Activated CD4-positive, alpha-beta memory T cell treated with anti-CD3 and anti-CD28 coated beads for 36 hours (primary cell): ENCODE measurements at regions of chr7 and their contacts with region 1.

Region 1: GRCh38 chr7:92633211-92633906 is 43.2 kb upstream of the FAM133B start:
- DNase-seq: peak; percentile 53
- H3K4me3 Mint-ChIP-seq: peak overlapping the region; percentile 36
- H3K27ac Mint-ChIP-seq: peak overlapping the region; percentile 93
- H3K4me1 Mint-ChIP-seq: peaks cover 81% of the 10 kb centered on the region
- H3K27me3 Mint-ChIP-seq: no peaks in the 10 kb centered on the region

Region 2: GRCh38 chr7:92135052-92135889 is 498.1 kb before region 1 on chr7:
- CTCF ChIA-PET with region 1: no interaction called
- POLR2A ChIA-PET with region 1: no interaction called
- intact Hi-C with region 1: no loop called
- DNase-seq: peak; percentile 30
- H3K4me3 Mint-ChIP-seq: peak overlapping the region; percentile 99
- H3K27ac Mint-ChIP-seq: peak overlapping the region; percentile 100
- H3K4me1 Mint-ChIP-seq: peaks cover 30% of the 10 kb centered on the region
- H3K27me3 Mint-ChIP-seq: peaks cover 2% of the 10 kb centered on the region

Region 3: GRCh38 chr7:92621026-92621540 is 12.3 kb before region 1 on chr7:
- CTCF ChIA-PET with region 1: interaction called, 9 read pairs
- POLR2A ChIA-PET with region 1: interaction called, 7 read pairs
- intact Hi-C with region 1: loop called (anchors 1 kb)
- DNase-seq: peak; percentile 86
- H3K4me3 Mint-ChIP-seq: peak overlapping the region; percentile 49
- H3K27ac Mint-ChIP-seq: peak overlapping the region; percentile 93
- H3K4me1 Mint-ChIP-seq: peaks cover 53% of the 10 kb centered on the region
- H3K27me3 Mint-ChIP-seq: no peaks in the 10 kb centered on the region

Region 4: DNA sequence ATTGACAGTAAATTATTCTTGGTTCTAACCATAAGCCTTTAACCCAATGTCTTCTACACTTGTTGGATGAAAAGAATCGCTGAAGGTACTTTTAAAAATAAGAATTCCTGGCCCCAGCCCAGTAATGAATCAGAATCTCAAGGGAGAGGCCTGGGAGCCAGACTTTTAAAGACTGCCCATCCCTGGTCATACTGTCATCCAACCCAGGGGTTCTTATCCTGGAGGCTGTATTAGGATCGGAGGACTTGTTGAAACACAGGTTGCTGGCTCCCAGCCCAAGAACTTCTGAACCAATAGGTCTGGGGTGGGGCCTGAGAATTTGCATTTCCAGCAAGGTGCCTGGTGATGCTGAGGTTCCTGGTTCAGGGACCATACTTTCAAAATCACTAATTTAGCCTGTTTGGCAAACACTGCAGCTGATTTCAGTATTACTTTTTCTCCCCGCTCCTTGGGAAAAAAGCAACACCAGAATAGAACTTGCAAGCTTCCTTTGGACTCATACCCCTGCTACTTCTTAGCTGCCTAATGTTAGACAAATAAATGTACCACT is 36.3 kb after region 1 on chr7:
- CTCF ChIA-PET with region 1: interaction called, 3 read pairs
- POLR2A ChIA-PET with region 1: interaction called, 12 read pairs
- intact Hi-C with region 1: loop called (anchors 1 kb)
- DNase-seq: peak; percentile 26
- H3K4me3 Mint-ChIP-seq: no peak overlapping the region
- H3K27ac Mint-ChIP-seq: peak overlapping the region; percentile 63
- H3K4me1 Mint-ChIP-seq: peaks cover 67% of the 10 kb centered on the region
- H3K27me3 Mint-ChIP-seq: no peaks in the 10 kb centered on the region

Region 5: GRCh38 chr7:92708111-92709042 is 75.0 kb after region 1 on chr7:
- CTCF ChIA-PET with region 1: no interaction called
- POLR2A ChIA-PET with region 1: interaction called, 4 read pairs
- intact Hi-C with region 1: loop called (anchors 1 kb)
- DNase-seq: no peak
- H3K4me3 Mint-ChIP-seq: no peak overlapping the region
- H3K27ac Mint-ChIP-seq: peak overlapping the region; percentile 88
- H3K4me1 Mint-ChIP-seq: peaks cover 55% of the 10 kb centered on the region
- H3K27me3 Mint-ChIP-seq: no peaks in the 10 kb centered on the region

Region 6: GRCh38 chr7:92740700-92741126 is 107.4 kb after region 1 on chr7:
- CTCF ChIA-PET with region 1: no interaction called
- POLR2A ChIA-PET with region 1: no interaction called
- intact Hi-C with region 1: no loop called
- DNase-seq: no peak
- H3K4me3 Mint-ChIP-seq: no peak overlapping the region
- H3K27ac Mint-ChIP-seq: no peak overlapping the region
- H3K4me1 Mint-ChIP-seq: peaks cover 63% of the 10 kb centered on the region
- H3K27me3 Mint-ChIP-seq: no peaks in the 10 kb centered on the region

Region 7: DNA sequence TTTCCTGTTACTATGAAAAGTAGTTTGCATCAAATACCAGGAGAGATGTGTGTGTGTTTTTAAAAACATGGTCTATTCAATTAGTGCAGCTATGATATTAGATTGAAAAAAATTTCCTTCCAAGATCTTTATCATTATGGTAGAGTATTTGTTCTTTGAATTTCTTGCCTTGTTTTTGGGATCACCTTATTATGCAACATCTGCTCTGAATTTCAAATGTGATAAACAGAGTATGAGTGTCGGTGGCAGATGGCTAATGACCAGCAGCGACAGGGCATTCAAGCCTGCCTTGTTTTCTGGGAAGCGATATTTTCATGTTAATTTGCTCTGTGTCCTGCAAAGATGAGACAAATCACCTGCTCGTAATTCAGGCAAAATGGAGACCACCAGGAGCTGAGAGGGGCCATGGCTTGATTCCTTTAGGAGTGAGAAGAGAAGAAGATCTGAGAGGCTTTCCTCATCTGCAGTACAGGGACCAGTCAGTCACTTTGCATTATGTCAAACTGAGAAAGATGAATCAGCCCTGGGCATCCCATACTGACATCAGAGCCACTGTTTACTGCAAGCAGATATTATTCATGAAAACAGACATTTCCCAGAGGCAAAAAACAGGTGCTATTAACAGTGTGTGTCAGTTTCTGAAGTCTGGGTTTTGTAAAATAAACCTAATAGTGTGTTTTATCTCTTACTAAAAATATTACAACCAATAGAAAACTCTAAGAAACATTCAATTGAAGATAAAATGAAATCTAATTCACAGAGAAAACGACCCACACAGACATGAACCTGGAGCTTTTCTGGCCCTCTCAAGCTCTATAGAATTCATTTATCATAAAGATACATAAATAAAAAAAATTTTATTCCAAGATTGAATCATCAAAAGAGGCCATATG is 135.4 kb after region 1 on chr7:
- CTCF ChIA-PET with region 1: no interaction called
- POLR2A ChIA-PET with region 1: no interaction called
- intact Hi-C with region 1: loop called (anchors 1 kb)
- DNase-seq: peak; percentile 64
- H3K4me3 Mint-ChIP-seq: peak overlapping the region; percentile 48
- H3K27ac Mint-ChIP-seq: peak overlapping the region; percentile 83
- H3K4me1 Mint-ChIP-seq: peaks cover 72% of the 10 kb centered on the region
- H3K27me3 Mint-ChIP-seq: no peaks in the 10 kb centered on the region

Region 8: GRCh38 chr7:92833024-92833765 is 199.8 kb after region 1 on chr7:
- CTCF ChIA-PET with region 1: interaction called, 27 read pairs
- POLR2A ChIA-PET with region 1: interaction called, 24 read pairs
- intact Hi-C with region 1: loop called (anchors 1 kb)
- DNase-seq: peak; percentile 94
- H3K4me3 Mint-ChIP-seq: peak overlapping the region; percentile 97
- H3K27ac Mint-ChIP-seq: peak overlapping the region; percentile 98
- H3K4me1 Mint-ChIP-seq: peaks cover 43% of the 10 kb centered on the region
- H3K27me3 Mint-ChIP-seq: no peaks in the 10 kb centered on the region

Region 9: DNA sequence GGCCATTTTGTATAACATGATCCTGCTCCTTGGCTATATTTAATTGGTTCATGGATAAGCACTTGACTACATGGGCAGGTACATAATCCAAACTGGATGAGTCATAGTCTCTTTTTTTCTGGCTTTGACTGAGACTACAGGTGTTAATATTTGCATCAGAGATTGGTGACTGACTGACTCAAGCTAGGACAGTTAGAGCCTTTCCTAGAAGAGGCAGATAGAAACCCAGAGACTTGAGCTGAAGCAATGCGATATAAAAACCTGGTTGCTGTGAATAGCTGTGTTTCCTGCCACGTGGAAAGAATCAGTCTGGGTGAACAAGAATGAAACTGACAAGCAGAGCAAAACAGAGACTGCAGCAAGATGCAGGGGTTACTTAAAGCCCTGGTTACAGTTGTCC is 403.4 kb after region 1 on chr7:
- CTCF ChIA-PET with region 1: no interaction called
- POLR2A ChIA-PET with region 1: no interaction called
- intact Hi-C with region 1: loop called (anchors 2 kb)
- DNase-seq: peak; percentile 64
- H3K4me3 Mint-ChIP-seq: no peak overlapping the region
- H3K27ac Mint-ChIP-seq: peak overlapping the region; percentile 53
- H3K4me1 Mint-ChIP-seq: peaks cover 22% of the 10 kb centered on the region
- H3K27me3 Mint-ChIP-seq: no peaks in the 10 kb centered on the region